ENCODE measurements at regions of chr12 and their contacts with region 1.

Region 1: DNA sequence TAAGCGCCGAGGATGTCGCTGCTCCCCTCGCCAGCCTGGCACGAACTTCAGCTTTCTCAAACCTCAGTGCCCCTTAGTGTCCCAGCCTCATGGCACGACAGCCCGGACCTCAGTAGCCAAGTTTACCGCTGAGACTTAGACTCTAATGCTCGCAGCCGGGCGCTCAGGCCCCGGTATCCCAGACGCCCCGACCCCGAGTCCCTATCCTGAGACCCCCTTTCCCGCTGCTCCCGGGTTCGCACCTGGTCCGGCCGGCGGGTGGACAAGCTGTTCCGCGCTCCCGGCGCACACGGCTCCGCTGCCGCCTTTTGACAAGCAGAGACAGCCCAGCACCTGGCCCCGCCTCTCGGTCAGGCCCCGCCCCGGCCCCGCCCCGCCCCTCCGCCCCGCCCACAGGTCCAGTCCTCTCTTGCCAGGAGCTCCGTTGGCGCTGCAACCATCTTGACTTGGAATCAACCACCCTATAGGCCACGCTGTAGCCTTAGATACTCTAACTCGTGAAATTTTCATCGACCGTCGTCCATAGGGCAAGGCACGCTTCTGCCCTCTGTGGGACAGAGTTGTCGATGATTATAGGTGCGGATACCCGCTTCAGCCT is at the start of gene VDR:
- DNase-seq: peak; percentile 85
- ATAC-seq: peak; percentile 78
- H3K4me3 Mint-ChIP-seq: peak within 1 kb of the TSS; percentile 85
- H3K27ac Mint-ChIP-seq: peak within 1 kb of the TSS; percentile 86
- H3K4me1 Mint-ChIP-seq: peaks cover 43% of the 10 kb centered on the region
- H3K27me3 Mint-ChIP-seq: peaks cover 34% of the 10 kb centered on the region
- total RNA-seq, gene VDR: 34.9 to 69.8 TPM

Region 2: DNA sequence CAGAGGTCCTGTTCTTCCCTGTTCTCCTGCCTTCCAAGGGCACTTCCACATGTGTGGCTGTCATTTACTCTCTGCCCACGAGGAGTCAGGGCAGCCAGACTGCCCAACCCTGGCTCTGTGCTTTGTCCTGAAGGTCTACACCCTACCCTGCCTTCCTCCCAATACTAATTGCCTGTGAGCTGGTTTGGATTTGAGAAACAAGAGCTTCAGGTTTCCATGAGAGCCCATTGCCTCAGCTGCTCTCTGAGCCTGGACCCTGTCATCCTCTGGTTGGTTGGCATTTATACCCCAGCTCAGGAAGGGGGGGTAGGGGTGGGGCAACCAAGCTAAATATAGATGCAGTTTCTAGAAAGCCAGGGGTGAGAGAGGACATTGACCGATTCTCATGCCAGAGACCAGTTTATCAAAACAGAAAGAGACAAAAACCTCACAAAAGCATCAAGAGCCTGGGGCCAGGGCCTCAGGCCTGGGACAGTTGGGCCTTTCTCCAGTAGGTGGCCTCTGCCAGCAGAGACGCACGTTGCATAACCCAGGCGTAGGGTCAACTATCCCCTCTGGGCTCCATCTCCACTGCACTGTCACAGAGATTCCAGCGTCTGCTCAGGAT is 34.5 kb before region 1 on chr12:
- CTCF ChIA-PET with region 1: interaction called, 10 read pairs
- DNase-seq: no peak
- ATAC-seq: no peak
- H3K4me3 Mint-ChIP-seq: no peak overlapping the region
- H3K27ac Mint-ChIP-seq: peak overlapping the region; percentile 73
- H3K4me1 Mint-ChIP-seq: peaks cover 69% of the 10 kb centered on the region
- H3K27me3 Mint-ChIP-seq: no peaks in the 10 kb centered on the region

Region 3: DNA sequence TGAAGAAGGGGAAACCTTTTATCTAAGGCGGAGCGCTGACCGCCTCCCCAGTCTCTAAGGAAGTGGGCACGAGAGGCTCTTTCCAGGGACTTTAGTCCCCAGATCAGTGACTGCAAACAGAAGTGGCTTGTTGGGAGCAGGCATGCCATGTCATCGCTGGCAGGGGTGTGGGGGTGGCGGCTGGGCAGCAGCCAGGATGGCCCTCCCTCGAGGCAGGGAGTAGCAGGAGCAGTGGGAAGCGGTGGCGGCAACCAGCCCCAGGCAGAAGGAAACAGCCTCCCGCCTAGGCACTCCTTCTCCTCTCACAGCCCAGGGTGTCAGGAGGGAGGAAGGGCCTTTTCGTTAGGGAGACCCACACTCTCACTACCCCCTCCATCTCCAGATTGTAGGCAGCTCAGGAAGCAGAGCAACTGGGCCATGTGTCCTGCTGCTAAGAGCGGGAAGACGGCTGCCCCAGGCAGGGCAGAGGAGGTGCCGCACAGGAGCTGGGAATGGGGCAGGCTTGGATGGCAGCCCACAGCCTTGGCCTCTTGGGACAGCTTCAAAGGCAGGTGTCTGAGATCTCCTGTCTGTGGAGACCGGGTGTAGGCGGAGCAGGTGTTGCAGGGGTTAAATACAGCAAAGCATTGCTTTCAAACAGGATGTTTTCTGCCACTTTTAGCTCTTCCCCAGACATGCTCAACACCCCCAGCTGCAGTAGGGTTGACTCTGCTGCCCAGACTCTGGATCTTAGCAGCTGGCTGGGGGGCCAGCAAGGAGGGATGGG is 21.8 kb before region 1 on chr12:
- CTCF ChIA-PET with region 1: interaction called, 29 read pairs
- DNase-seq: peak; percentile 68
- ATAC-seq: peak; percentile 43
- H3K4me3 Mint-ChIP-seq: peak overlapping the region; percentile 73
- H3K27ac Mint-ChIP-seq: peak overlapping the region; percentile 96
- H3K4me1 Mint-ChIP-seq: peaks cover 80% of the 10 kb centered on the region
- H3K27me3 Mint-ChIP-seq: no peaks in the 10 kb centered on the region

Region 4: GRCh38 chr12:47889040-47889439 is 15.8 kb before region 1 on chr12:
- CTCF ChIA-PET with region 1: interaction called, 29 read pairs
- DNase-seq: peak; percentile 80
- ATAC-seq: peak; percentile 86
- H3K4me3 Mint-ChIP-seq: peak overlapping the region; percentile 76
- H3K27ac Mint-ChIP-seq: peak overlapping the region; percentile 97
- H3K4me1 Mint-ChIP-seq: peaks cover 91% of the 10 kb centered on the region
- H3K27me3 Mint-ChIP-seq: no peaks in the 10 kb centered on the region

Region 5: DNA sequence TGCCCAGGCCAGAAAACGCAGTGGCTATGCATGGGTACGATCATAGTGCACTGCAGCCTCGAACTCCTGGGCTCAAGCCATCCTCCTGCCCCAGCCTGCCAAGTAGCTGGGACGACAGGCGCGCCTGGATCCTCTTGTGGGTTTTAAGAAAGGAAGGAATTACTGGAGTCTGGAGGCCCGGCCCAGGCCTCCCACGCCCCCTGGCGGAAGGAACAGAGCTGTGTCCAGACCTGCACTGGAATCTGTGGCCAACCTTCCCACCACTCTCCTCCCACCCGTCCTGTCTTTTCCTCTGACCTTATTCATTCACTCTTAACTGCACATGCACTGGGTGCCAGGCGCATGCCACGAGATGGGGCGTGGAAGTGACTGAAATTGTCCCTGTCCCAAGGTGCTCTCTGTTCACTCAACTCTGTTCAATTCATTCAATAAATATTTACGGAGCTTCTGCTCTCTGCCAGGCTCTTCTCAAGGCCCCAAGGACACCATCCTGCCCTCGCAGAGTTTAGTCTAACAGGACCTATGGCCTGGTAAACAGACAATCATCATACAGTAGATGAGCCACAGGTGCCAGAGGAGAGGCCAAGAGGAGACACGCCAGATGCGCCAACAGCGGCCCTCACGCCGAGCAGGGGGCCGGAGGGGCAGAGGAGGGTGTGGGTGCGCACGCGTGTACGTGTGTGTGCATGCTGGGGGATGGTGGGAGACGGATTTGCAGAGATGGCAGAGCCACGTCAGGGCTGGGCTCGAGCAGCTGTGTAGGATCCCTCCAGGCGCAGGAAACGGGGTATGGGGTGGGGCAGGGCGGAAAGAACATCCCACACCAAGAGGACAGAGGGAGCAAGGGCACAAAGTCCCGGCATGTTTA is 44.9 kb after region 1 on chr12:
- CTCF ChIA-PET with region 1: interaction called, 34 read pairs
- DNase-seq: peak; percentile 60
- ATAC-seq: peak; percentile 76
- H3K4me3 Mint-ChIP-seq: no peak overlapping the region
- H3K27ac Mint-ChIP-seq: no peak overlapping the region
- H3K4me1 Mint-ChIP-seq: peaks cover 14% of the 10 kb centered on the region
- H3K27me3 Mint-ChIP-seq: peaks cover 8% of the 10 kb centered on the region

Measured in activated CD8-positive, alpha-beta memory T cell treated with anti-CD3 and anti-CD28 coated beads, Interleukin-2, amount 10 ng/mL, durations not matched to agents 7 days and 5 days (primary cell).